ENCODE measurements at regions of chr7 and their contacts with region 1.

Region 1: GRCh38 chr7:111108496-111108895 is 17.6 kb downstream of the LRRN3 start:
- DNase-seq: no peak
- H3K4me3 Mint-ChIP-seq: no peak overlapping the region
- H3K27ac Mint-ChIP-seq: no peak overlapping the region
- H3K4me1 Mint-ChIP-seq: peaks cover 60% of the 10 kb centered on the region
- H3K27me3 Mint-ChIP-seq: no peaks in the 10 kb centered on the region

Region 2: DNA sequence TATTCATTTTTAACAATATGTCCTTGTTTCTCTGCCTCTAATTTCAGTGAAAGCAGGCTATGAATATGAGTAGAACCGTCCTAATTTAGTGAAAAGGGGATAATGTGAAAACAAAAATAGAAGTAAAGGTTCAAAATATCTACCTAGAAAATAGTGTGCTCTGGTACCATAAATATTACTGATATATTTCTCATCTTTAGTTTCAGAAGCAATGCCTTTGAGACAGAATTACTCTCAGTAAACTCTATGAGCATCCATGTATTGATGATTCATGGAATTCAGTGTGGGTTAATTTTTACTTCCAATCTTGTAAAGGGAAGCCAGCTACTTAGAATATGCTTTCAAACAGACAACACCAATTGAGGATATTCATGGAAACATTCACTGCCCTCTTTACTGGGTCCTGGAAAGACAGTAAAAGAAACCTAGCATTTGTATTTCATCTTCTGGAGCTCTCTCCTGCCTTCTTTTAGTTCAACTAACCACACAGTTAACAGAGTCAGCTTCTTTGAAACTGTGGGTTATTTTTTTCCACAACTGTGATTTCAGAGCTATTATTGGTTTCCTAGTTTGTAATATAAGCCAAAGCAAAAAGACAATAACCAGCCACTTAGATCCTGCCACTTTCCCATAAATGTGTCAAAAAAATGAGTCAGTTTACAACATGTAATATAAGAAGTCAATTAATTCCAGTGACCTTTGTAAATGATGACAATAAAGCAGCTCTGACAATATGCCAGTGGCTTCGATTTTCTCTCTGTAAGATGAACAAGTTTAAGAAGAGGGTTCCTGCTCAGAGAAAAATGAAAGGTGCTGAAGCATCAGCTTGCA is 15.9 kb before region 1 on chr7:
- CTCF ChIA-PET with region 1: interaction called, 10 read pairs
- POLR2A ChIA-PET with region 1: no interaction called
- DNase-seq: no peak
- H3K4me3 Mint-ChIP-seq: peak overlapping the region; percentile 99
- H3K27ac Mint-ChIP-seq: peak overlapping the region; percentile 93
- H3K4me1 Mint-ChIP-seq: peaks cover 57% of the 10 kb centered on the region
- H3K27me3 Mint-ChIP-seq: no peaks in the 10 kb centered on the region